OCI-LY7 (cell line): ENCODE measurements at regions of chr13 and their contacts with region 1.

Region 1: DNA sequence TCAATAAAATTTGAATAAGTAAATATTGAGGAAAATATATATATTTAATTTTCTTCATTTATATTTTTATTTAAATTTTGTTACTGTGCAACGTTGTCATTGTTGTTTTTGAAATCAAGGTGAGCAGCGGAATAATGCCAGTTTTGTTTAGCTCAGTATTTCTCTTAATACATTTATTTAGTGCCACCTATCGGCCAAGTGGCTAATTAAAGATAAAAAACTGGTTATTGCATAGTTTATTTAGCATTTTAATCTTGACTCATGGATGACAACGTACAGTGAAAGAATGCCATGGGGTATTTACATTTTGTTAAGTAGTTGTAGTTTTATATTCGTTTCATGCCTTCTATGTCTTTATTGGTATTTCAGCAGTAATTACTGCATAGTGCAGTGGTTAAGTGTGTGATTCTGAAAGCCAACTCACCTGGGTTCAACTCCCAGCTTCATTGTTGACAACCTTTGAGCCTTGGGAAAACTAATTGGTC is 265.9 kb downstream of the MYO16 start:
- DNase-seq: peak; percentile 35
- H3K4me3 ChIP-seq: no peak overlapping the region
- H3K27ac ChIP-seq: no peak overlapping the region
- H3K4me1 ChIP-seq: no peaks in the 10 kb centered on the region
- CTCF ChIP-seq: peak; percentile 72

Region 2: GRCh38 chr13:108322206-108322824 is 572.9 kb before region 1 on chr13:
- CTCF ChIA-PET with region 1: no interaction called
- POLR2A ChIA-PET with region 1: no interaction called
- intact Hi-C with region 1: loop called (anchors 5 kb)
- DNase-seq: peak; percentile 51
- H3K4me3 ChIP-seq: no peak overlapping the region
- H3K27ac ChIP-seq: no peak overlapping the region
- H3K4me1 ChIP-seq: peaks cover 20% of the 10 kb centered on the region
- CTCF ChIP-seq: peak; percentile 80